ENCODE measurements at regions of chr17 and their contacts with region 1.

Region 1: GRCh38 chr17:28580959-28581358 is 4.3 kb upstream of the ALDOC start:
- DNase-seq: no peak
- H3K4me3 ChIP-seq: no peak overlapping the region
- H3K27ac ChIP-seq: no peak overlapping the region
- H3K4me1 ChIP-seq: peaks cover 10% of the 10 kb centered on the region
- H3K27me3 ChIP-seq: no peaks in the 10 kb centered on the region
- CTCF ChIP-seq: no peak
- POLR2A ChIP-seq: no peak

Region 2: DNA sequence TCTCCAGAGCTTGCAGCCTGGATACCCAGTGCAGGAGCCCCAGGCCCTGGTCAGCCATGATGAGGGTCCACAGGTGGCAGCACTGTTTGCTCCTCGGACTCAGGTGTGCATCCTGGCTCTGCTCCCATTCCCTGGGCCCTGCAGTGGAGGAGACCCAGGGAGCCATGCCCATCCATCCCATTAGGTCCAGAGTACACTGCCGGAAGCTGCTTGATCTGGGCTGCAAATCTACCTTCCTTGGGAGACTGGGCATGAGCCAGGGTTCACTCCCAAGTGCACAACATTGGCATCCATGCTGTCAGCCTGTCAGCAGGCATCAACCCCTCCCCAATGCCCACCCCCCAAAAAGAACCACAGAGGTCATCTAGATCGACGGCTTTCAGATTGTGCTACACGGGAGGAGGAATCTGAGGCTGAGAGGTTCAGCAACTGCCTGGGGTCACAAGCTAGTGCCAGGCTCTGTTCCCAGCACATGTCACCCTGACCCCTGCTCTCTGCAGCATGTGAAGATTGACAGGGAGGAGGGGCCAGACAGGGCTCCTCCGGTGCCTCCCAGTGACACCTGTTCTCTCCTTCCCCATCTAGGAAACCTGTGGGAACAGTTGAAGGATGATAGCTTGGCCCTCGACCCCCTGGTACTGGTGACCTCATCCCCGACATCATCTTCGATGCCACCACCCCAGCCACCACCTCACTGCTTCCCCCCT is 44.3 kb before region 1 on chr17:
- intact Hi-C with region 1: loop called (anchors 1 kb)
- DNase-seq: no peak
- H3K4me3 ChIP-seq: no peak overlapping the region
- H3K27ac ChIP-seq: no peak overlapping the region
- H3K4me1 ChIP-seq: peaks cover 18% of the 10 kb centered on the region
- H3K27me3 ChIP-seq: no peaks in the 10 kb centered on the region
- CTCF ChIP-seq: no peak
- POLR2A ChIP-seq: no peak

Measured in vagina (tissue), 2 donors.